Activated CD4-positive, alpha-beta T cell treated with anti-CD3 and anti-CD28 coated beads for 36 hours (primary cell): ENCODE measurements at regions of chr11 and their contacts with region 1.

Region 1: DNA sequence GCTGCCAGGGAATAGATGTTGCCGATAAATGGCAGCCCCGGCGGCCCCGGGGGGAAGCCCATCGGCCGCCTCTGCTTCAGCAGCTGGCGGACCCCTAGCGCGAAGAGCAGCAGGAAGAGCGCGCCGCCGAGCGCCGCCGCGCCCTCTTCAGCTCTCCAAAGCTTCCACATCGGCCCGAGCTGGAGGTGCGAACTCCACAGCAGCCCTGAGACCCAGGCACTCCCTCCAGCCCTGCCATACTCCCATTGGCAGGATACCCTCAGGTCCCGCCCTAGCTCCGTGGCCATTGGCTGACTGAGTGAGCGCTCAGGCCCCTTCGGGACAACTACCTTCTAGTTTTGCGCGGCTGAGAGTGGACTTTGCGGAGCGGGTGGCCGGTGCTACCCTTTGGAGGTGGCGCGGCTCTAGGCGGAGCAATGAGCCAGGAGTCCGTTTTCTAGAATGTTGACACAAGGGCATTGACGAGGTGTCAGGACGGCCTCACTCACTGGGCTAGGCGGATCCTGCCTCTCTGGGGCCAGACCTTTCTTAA is at the start of gene CYP2R1:
- DNase-seq: peak; percentile 94
- ATAC-seq: peak; percentile 84
- H3K4me3 Mint-ChIP-seq: peak within 1 kb of the TSS; percentile 81
- H3K27ac Mint-ChIP-seq: peak within 1 kb of the TSS; percentile 96
- H3K4me1 Mint-ChIP-seq: peaks cover 52% of the 10 kb centered on the region
- H3K27me3 Mint-ChIP-seq: peaks cover 2% of the 10 kb centered on the region
- total RNA-seq, gene CYP2R1: 13.1 to 14.8 TPM

Region 2: DNA sequence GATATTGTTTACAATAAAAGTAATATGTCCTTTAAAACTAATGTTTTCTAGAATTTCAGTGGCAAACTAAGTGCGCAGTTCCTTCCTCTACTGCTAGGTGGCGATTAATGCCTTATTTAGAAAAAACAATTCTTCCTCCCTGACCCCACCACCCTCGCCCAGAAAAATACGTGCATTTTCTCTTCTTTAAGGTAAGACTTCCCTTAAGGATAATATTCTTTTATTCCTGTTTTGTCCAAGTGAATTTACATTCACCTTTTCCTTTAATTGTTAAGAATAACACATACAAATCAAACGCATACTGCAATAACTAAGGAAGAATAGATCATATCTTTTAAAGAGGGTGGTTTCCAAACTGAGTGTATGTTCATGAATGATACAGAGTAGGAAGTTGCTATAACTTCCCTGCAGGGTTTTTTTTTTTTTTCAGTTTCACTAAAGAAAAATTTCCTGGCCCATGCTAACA is 354.9 kb before region 1 on chr11:
- CTCF ChIA-PET with region 1: no interaction called
- POLR2A ChIA-PET with region 1: no interaction called
- intact Hi-C with region 1: loop called in 1 of 2 experiments (anchors 5 kb)
- DNase-seq: peak; percentile 59
- ATAC-seq: peak; percentile 90
- H3K4me3 Mint-ChIP-seq: peak overlapping the region; percentile 59
- H3K27ac Mint-ChIP-seq: peak overlapping the region; percentile 87
- H3K4me1 Mint-ChIP-seq: peaks cover 22% of the 10 kb centered on the region
- H3K27me3 Mint-ChIP-seq: no peaks in the 10 kb centered on the region

Region 3: DNA sequence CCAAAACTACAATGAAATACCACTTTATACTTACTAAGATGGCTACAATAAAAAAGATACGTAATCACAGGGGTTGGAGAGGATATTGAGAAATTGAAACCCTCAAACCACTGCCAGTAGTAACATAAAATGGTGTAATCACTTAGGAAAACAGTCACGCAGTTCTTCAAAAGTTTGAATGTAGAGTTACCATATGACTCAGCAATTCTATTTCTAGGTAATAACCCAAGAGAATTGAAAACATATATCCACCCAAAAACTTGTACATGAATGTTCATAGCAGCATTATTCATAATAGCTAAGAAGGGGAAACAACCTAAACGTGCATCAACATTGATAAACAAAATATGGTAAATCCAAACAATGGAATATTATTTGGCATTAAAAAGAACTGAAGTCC is 347.5 kb before region 1 on chr11:
- CTCF ChIA-PET with region 1: no interaction called
- POLR2A ChIA-PET with region 1: interaction called, 4 read pairs
- intact Hi-C with region 1: loop called (anchors 2 to 5 kb)
- DNase-seq: no peak
- ATAC-seq: peak; percentile 79
- H3K4me3 Mint-ChIP-seq: no peak overlapping the region
- H3K27ac Mint-ChIP-seq: peak overlapping the region; percentile 72
- H3K4me1 Mint-ChIP-seq: peaks cover 40% of the 10 kb centered on the region
- H3K27me3 Mint-ChIP-seq: no peaks in the 10 kb centered on the region

Region 4: GRCh38 chr11:14578541-14578956 is 313.6 kb before region 1 on chr11:
- CTCF ChIA-PET with region 1: no interaction called
- POLR2A ChIA-PET with region 1: no interaction called
- intact Hi-C with region 1: loop called in 1 of 2 experiments (anchors 1 kb)
- DNase-seq: peak; percentile 58
- ATAC-seq: peak; percentile 89
- H3K4me3 Mint-ChIP-seq: peak overlapping the region; percentile 0
- H3K27ac Mint-ChIP-seq: peak overlapping the region; percentile 74
- H3K4me1 Mint-ChIP-seq: peaks cover 49% of the 10 kb centered on the region
- H3K27me3 Mint-ChIP-seq: no peaks in the 10 kb centered on the region

Region 5: DNA sequence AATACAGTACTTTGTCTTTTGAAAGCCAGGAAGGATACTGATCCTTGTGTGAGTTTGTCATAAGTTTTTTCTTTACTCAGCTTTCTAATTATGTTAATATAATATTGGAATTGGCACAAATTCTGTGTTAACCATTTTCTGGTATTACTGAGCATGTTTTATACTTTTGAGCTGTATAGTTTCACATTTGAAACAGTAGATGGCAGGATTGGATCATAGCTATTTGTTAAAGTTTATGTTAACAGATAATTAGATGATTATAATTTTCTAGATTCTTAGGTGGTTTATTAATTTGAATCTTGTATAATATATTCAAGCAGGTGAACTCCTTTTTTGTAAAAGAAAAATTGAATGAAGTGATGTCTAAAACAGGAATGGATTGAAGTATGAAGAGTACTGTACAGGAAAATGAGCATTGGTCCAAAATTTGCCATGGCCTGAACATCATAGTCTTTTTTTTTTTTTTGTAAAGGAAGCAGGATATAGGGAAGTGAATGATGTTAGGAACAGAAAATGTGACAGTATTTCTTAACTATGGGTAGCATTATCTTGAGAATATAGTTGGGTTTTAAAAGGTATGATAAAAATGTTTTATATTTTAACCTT is 102.1 kb before region 1 on chr11:
- CTCF ChIA-PET with region 1: interaction called, 11 read pairs
- POLR2A ChIA-PET with region 1: no interaction called
- intact Hi-C with region 1: no loop called
- DNase-seq: no peak
- ATAC-seq: no peak
- H3K4me3 Mint-ChIP-seq: no peak overlapping the region
- H3K27ac Mint-ChIP-seq: no peak overlapping the region
- H3K4me1 Mint-ChIP-seq: peaks cover 7% of the 10 kb centered on the region
- H3K27me3 Mint-ChIP-seq: no peaks in the 10 kb centered on the region

Region 6: GRCh38 chr11:14953904-14954303 is 61.8 kb after region 1 on chr11:
- CTCF ChIA-PET with region 1: no interaction called
- POLR2A ChIA-PET with region 1: no interaction called
- intact Hi-C with region 1: no loop called
- DNase-seq: no peak
- ATAC-seq: no peak
- H3K4me3 Mint-ChIP-seq: no peak overlapping the region
- H3K27ac Mint-ChIP-seq: no peak overlapping the region
- H3K4me1 Mint-ChIP-seq: no peaks in the 10 kb centered on the region
- H3K27me3 Mint-ChIP-seq: no peaks in the 10 kb centered on the region

Region 7: GRCh38 chr11:15053191-15053685 is 161.1 kb after region 1 on chr11:
- CTCF ChIA-PET with region 1: interaction called, 5 read pairs
- POLR2A ChIA-PET with region 1: no interaction called
- intact Hi-C with region 1: loop called in 1 of 2 experiments (anchors 1 kb)
- DNase-seq: peak; percentile 68
- ATAC-seq: peak; percentile 87
- H3K4me3 Mint-ChIP-seq: no peak overlapping the region
- H3K27ac Mint-ChIP-seq: peak overlapping the region; percentile 84
- H3K4me1 Mint-ChIP-seq: peaks cover 28% of the 10 kb centered on the region
- H3K27me3 Mint-ChIP-seq: peaks cover 5% of the 10 kb centered on the region